ENCODE measurements at regions of chr6 and their contacts with region 1.

Region 1: DNA sequence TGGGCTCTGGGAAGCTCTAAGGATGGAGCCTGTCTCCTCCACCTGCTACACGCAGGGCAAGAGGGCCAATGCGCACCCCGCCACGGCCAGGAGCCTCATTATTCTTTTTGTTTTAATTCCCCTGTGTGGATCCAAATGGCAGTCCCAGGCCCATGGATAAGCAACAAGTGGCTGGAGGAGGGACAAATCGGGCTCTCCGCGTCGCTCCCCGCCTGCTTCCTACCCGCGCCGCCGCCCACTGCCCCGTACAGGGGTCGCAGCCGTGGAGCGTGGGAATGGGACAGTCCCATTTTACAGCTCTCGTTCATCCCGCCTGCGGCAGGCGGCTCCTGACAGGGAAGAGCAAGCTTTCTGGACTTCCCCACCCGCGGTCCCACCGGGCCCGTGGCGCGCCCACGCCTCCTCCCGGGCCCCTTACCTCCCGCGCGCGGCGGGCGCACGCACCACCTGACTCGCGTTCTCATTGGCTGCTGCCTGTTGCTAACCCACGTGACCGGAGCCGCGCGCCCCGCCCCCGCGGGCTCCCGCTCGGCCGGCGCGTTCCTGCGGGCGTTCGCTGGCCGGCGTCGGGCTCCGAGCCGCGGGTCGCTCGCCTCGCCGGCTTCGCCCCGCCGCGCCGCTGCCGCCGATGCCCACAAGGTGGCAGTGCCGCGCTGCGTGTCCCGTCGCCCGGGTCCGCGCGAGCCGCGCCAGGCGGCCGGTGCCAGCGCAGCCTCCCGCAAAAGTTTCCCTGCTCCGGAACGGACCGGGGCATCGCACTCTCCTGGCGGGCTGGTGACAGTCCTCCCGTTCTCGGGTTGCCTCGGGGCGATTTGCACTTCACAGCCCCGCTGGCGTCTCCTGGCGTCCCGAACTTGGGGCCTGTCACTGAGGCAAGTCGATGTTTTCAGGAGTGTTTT is 93.3 kb downstream of the CD83 start:
- DNase-seq: peak; percentile 88 to 95 (median 91)
- H3K4me3 ChIP-seq: peak overlapping the region; percentile 59 to 96 (median 87)
- H3K27ac ChIP-seq: peak overlapping the region in 58 of 59 donors; percentile 43 to 96 (median 85)
- H3K27me3 ChIP-seq: no peaks in the 10 kb centered on the region
- CTCF ChIP-seq: peak in 54 of 56 donors; percentile 11 to 89 (median 66)

Region 2: DNA sequence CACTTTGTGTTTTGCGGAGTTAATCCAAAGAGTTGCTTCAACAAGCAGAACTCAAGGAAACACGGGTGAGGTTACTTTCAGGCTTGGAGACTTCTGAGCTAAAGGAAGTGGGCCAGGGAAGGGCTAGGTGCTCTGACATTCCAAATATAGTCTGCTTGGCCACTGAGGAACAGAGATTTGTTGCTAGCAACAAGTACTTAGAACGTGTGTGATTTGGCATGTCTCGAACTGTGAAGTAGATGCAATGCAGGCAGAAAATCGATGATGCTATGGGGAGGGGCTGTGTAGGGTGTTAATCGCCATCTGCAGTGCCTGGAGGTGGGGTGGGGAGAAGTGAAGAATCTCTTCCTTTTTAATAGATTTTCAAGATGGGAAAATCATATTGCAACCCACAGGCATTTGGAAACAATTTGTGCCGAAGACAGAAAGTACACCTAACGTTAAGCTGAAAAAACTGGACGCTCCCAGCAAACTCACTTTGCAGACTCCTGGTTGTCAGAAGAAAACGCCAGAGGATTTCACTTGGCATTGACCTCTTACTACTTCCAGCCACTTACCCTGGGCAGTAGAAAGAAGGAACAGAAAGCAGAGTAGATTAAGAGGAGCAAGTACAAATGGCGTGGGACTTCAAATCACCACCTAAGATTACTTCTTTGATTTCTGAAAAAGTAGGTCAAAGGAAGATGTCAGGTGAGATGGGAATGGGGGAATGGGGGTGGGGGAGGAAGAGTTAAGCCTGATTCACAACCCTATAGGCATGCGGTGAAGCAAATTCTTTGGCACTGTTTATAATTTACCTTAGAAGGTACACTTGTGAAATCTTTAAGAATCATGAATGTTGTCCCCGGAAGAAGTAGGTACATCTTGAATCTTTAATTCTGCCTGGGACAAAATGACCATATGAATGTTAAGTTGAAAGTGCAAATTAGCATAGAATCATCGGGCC is 220.7 kb after region 1 on chr6:
- intact Hi-C with region 1: loop called in 1 of 2 experiments (anchors 10 kb)
- DNase-seq: no peak
- H3K4me3 ChIP-seq: no peak overlapping the region
- H3K27ac ChIP-seq: no peak overlapping the region
- H3K27me3 ChIP-seq: peaks cover 0 to 9% (median 0%) of the 10 kb centered on the region in 45 donors
- CTCF ChIP-seq: no peak

Region 3: GRCh38 chr6:14488180-14488579 is 277.3 kb after region 1 on chr6:
- intact Hi-C with region 1: no loop called
- DNase-seq: no peak
- H3K4me3 ChIP-seq: no peak overlapping the region
- H3K27ac ChIP-seq: no peak overlapping the region
- H3K27me3 ChIP-seq: no peaks in the 10 kb centered on the region
- CTCF ChIP-seq: no peak

Region 4: GRCh38 chr6:15245361-15246216 is 1034.7 kb after region 1 on chr6 and contains the start of gene JARID2:
- intact Hi-C with region 1: loop called (anchors 2 to 5 kb)
- DNase-seq: peak; percentile 95 to 98 (median 97)
- H3K4me3 ChIP-seq: peak within 1 kb of the TSS; percentile 62 to 97 (median 89)
- H3K27ac ChIP-seq: peak within 1 kb of the TSS; percentile 79 to 100 (median 97)
- H3K27me3 ChIP-seq: no peaks in the 10 kb centered on the region
- CTCF ChIP-seq: peak in 36 of 56 donors; percentile 5 to 46 (median 20)
- total RNA-seq, gene JARID2: 14.2 to 26.7 (median 20.5) TPM

Region 5: DNA sequence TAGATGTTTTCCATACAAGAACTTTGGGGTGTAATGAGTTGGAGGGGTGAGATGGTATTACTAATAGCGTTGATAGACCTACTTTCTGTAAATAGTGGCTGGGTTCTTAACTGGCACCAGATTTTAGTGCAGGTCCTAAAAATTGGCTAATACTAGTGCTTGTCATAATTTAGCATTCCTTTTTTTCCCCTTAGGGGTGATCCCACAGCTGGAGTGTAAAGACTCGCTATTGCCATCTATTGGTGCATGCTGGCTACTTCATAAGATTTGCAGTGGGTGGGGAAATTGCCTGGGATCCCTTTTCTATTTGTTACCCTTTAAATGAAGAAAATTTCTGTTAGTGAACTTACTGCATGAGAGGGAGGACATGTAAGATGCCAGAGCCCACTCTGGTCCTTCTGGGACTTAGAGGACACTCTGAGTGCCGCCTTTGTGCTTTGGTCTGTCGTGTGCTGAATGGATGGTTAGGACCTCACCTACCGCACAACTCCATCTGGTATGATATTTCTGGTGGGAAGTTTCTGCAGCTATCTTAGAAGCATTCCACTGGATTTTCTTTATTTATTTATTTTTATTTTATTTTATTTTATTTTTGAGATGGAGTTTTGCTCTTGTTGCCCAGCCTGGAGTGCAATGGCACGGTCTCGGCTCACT is 1230.4 kb after region 1 on chr6:
- intact Hi-C with region 1: loop called in 1 of 2 experiments (anchors 10 kb)
- DNase-seq: peak in 1 of 10 donors; percentile 53
- H3K4me3 ChIP-seq: no peak overlapping the region
- H3K27ac ChIP-seq: no peak overlapping the region
- H3K27me3 ChIP-seq: no peaks in the 10 kb centered on the region
- CTCF ChIP-seq: peak; percentile 54 to 88 (median 80)

Region 6: DNA sequence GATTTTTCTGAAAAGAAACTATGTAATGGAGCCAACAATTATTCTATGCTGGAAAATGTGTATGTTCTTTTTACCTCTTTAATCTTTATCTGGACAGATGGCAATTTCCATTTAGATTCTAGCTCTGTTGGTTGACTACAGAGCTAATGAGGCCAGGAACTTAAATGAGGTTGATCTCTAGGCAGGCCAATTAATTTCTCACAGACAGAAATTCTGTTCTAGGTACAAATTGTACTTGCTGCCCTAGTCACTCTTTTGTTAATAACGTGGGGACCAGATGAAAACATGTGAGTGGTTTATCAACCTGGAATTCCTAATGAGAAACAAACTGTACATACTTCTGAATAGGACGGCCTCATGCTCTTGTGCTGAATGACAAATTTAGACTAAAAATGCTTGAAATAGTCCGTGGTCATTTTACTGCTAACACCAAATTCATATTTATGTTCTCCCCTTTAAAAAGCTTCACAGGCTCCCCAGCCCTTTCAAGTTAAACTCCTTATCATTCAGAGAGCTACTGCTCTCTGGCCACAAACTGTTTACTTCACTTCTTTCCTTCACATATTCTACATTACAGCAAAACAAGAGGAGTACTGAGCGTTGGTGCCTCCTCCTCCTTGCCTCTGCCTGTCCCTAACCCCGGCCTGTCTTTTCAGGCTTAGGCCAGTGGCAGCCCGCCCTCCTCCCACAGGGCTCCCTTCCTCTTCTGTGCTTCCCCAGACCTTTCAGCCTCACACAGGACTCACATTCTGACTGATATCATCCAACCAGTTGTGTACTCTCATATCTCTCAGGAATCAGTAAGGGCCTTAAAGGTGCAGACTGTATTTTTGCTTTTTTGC is 1410.5 kb after region 1 on chr6:
- intact Hi-C with region 1: loop called (anchors 2 to 10 kb)
- DNase-seq: peak in 1 of 10 donors; percentile 25
- H3K4me3 ChIP-seq: no peak overlapping the region
- H3K27ac ChIP-seq: peak overlapping the region in 31 of 59 donors; percentile 12 to 73 (median 55)
- H3K27me3 ChIP-seq: no peaks in the 10 kb centered on the region
- CTCF ChIP-seq: no peak

Measured in dorsolateral prefrontal cortex (tissue), 120 donors.